Common myeloid progenitor, CD34-positive (primary cell): ENCODE measurements at regions of chr7 and their contacts with region 1.

Region 1: GRCh38 chr7:93902777-93903423 is 3.5 kb upstream of the GNGT1 start:
- DNase-seq: peak in 2 of 3 donors; percentile 56 to 65
- H3K4me3 ChIP-seq: no peak overlapping the region
- H3K27ac ChIP-seq: no peak overlapping the region
- H3K4me1 ChIP-seq: no peaks in the 10 kb centered on the region
- H3K27me3 ChIP-seq: peaks cover 0 to 67% (median 33%) of the 10 kb centered on the region in 5 experiments

Region 2: DNA sequence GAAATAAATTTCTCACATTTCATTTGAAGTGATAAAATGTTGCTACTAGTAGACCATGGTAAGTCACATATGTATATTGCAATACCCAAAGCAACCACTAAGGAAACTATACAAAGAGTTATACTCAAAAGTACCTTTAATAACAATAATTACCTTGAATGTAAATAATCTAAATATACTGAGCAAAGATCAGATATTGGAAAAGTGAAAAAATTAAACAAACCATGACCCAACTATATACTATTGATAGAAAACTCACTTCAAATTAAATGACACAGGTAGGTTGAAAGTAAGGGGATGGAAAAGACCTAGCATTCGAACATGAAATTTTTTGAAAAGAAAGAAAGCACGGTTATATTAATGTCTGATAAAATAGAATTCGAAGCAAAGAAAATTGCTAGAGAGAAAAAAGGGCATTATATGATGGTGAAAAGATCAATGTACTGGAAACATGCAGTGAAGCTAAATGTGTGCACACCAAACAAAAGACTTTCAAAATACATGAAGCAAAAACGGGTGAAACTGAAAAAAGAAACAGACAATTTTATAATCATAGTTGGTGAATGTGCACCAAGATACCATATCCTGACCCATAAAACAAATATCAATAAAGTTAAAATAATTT is 41.5 kb before region 1 on chr7:
- CTCF ChIA-PET with region 1: no interaction called
- POLR2A ChIA-PET with region 1: no interaction called
- DNase-seq: peak in 1 of 3 donors; percentile 3
- H3K4me3 ChIP-seq: no peak overlapping the region
- H3K27ac ChIP-seq: no peak overlapping the region
- H3K4me1 ChIP-seq: no peaks in the 10 kb centered on the region
- H3K27me3 ChIP-seq: peaks cover 0 to 21% (median 6%) of the 10 kb centered on the region in 5 experiments

Region 3: GRCh38 chr7:93992423-93993110 is 89.7 kb after region 1 on chr7:
- CTCF ChIA-PET with region 1: no interaction called
- POLR2A ChIA-PET with region 1: no interaction called
- DNase-seq: no peak
- H3K4me3 ChIP-seq: no peak overlapping the region
- H3K27ac ChIP-seq: no peak overlapping the region
- H3K4me1 ChIP-seq: peaks cover 0 to 6% (median 2%) of the 10 kb centered on the region in 4 experiments
- H3K27me3 ChIP-seq: no peaks in the 10 kb centered on the region

Region 4: DNA sequence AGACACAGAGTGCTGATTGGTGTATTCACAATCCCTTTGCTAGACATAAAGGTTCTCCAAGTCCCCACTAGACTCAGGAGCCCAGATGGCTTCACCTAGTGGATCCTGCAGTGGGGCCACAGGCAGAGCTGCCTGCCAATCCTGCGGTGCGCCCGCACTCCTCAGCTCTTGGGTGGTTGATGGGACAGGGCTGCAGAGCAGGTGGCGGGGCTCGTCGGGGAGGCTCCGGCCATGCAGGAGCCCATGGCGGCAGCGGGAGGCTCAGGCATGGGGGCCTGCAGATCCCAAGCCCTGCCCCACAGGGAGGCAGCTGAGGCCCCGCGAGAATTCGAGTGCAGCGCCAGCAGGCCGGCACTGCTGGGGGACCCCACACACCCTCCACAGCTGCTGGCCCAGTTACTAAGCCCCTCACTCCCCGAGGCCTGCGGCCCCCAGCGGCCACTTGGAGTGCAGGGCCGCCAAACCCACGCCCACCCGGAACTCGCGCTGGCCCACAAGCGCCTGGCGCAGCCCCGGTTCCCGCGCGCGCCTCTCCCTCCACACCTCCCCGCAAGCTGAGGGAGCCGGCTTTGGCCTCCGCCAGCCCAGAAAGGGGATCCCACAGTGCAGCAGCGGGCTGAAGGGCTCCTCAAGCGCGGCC is 108.9 kb after region 1 on chr7:
- CTCF ChIA-PET with region 1: interaction called, 15 read pairs
- POLR2A ChIA-PET with region 1: no interaction called
- DNase-seq: no peak
- H3K4me3 ChIP-seq: no peak overlapping the region
- H3K27ac ChIP-seq: no peak overlapping the region
- H3K4me1 ChIP-seq: peaks cover 0 to 2% (median 0%) of the 10 kb centered on the region in 4 experiments
- H3K27me3 ChIP-seq: peaks cover 0 to 29% (median 2%) of the 10 kb centered on the region in 5 experiments

Region 5: GRCh38 chr7:94064541-94065191 is 161.8 kb after region 1 on chr7:
- CTCF ChIA-PET with region 1: interaction called, 12 read pairs
- POLR2A ChIA-PET with region 1: no interaction called
- DNase-seq: peak; percentile 50 to 75 (median 59)
- H3K4me3 ChIP-seq: no peak overlapping the region
- H3K27ac ChIP-seq: no peak overlapping the region
- H3K4me1 ChIP-seq: peaks cover 3 to 16% (median 13%) of the 10 kb centered on the region in 4 experiments
- H3K27me3 ChIP-seq: peaks cover 4 to 81% (median 52%) of the 10 kb centered on the region in 5 experiments

Region 6: GRCh38 chr7:94087664-94088352 is 184.9 kb after region 1 on chr7:
- CTCF ChIA-PET with region 1: interaction called, 37 read pairs
- POLR2A ChIA-PET with region 1: interaction called, 3 read pairs
- DNase-seq: peak; percentile 64 to 78 (median 64)
- H3K4me3 ChIP-seq: peak overlapping the region in 1 of 7 experiments; percentile 50
- H3K27ac ChIP-seq: no peak overlapping the region
- H3K4me1 ChIP-seq: peaks cover 0 to 10% (median 5%) of the 10 kb centered on the region in 4 experiments
- H3K27me3 ChIP-seq: peaks cover 0 to 83% (median 28%) of the 10 kb centered on the region in 5 experiments